ENCODE measurements at regions of chr3 and their contacts with region 1.

Region 1: GRCh38 chr3:168865022-168865551 is 769.4 kb upstream of the GOLIM4 start:
- DNase-seq: no peak
- H3K4me3 ChIP-seq: no peak overlapping the region
- H3K27ac ChIP-seq: no peak overlapping the region
- H3K4me1 ChIP-seq: no peaks in the 10 kb centered on the region
- H3K27me3 ChIP-seq: no peaks in the 10 kb centered on the region
- CTCF ChIP-seq: peak; percentile 77 to 81

Region 2: DNA sequence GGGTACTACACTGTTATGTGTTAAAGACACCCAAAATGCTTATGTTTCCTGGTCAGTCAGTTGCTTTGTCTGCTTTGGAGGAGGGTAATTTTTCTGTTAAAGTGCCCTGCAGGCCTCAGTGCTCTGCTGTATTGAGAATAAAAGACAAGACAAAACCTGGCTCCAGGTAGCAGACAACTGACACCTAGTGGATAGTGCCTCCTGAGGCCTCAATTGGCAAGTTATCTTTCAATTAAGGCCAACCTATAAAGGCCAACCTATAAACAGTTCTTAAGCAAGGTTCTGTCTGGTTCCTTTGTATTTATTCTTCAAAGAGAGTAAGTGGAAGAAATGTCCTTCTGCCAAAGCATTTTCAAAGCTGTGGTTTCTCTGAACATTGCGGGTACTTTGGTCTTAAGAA is 24.6 kb after region 1 on chr3:
- CTCF ChIA-PET with region 1: no interaction called
- dilution Hi-C with region 1: no loop called
- in situ Hi-C with region 1: no loop called
- intact Hi-C with region 1: loop called (anchors 1 kb)
- DNase-seq: peak; percentile 29
- H3K4me3 ChIP-seq: no peak overlapping the region
- H3K27ac ChIP-seq: no peak overlapping the region
- H3K4me1 ChIP-seq: peaks cover 4% of the 10 kb centered on the region
- H3K27me3 ChIP-seq: no peaks in the 10 kb centered on the region
- CTCF ChIP-seq: peak; percentile 38 to 62

Region 3: DNA sequence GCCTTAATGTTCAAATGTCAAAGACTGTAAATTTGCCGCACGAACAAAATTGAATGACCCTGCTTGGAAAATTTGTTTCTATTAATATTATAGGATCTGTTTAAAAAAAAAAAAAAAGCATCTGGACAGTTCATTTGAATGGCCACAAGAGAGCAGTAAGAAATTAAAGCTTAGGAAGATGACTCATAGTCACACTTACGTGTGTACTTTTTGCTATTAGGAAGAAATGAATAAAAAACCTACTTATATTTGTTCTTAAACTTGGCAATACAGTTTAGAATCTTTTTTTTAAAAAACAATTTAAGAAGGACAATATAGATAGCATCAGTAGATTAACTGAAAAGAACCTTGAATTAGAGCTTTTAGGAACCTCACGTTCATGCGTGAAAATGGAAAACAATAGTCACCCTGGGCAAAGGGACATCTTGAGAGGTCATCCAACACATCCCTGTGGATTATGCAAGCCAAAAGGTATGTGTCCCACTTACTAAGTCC is 176.6 kb after region 1 on chr3:
- CTCF ChIA-PET with region 1: interaction called, 4 read pairs
- dilution Hi-C with region 1: no loop called
- in situ Hi-C with region 1: no loop called
- intact Hi-C with region 1: loop called (anchors 5 kb)
- DNase-seq: peak; percentile 43
- H3K4me3 ChIP-seq: no peak overlapping the region
- H3K27ac ChIP-seq: peak overlapping the region; percentile 37
- H3K4me1 ChIP-seq: peaks cover 33% of the 10 kb centered on the region
- H3K27me3 ChIP-seq: no peaks in the 10 kb centered on the region
- CTCF ChIP-seq: peak; percentile 63 to 68

Region 4: DNA sequence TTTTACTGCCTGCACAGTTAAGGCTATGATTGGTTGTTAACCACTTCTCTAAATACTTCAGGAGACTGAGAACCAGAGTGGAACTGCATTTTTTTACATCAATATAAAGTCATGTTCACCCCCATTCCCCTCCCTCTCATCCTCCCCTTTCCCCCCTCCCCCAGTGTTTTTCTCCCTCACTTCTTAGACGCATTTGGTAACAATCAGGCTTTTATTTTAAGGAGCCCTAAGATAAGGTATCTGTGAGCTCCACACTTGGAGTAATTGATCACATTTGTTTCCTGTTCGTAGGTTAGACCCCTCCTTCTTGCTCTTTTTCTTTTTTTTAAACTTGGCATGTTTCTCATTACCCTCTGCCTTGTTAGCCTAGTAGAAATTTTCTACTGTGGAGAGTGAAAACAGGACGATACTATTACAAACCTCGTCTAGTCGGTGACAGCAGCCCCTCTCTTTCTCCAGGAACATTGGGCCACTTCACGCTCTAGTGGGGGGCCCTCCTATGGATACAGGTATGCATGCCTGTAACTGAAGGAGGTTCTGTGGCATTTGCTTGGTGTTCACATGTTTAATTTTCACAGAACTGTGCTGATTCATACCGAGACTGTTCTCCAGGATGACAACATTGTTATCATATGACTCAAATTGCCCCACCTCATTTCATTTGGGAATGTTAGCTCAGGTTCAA is 484.0 kb after region 1 on chr3:
- CTCF ChIA-PET with region 1: no interaction called
- dilution Hi-C with region 1: no loop called
- in situ Hi-C with region 1: no loop called
- intact Hi-C with region 1: loop called (anchors 10 kb)
- DNase-seq: peak; percentile 92
- H3K4me3 ChIP-seq: no peak overlapping the region
- H3K27ac ChIP-seq: peak overlapping the region; percentile 85
- H3K4me1 ChIP-seq: peaks cover 36% of the 10 kb centered on the region
- H3K27me3 ChIP-seq: no peaks in the 10 kb centered on the region
- CTCF ChIP-seq: no peak

Region 5: GRCh38 chr3:169744366-169745054 is 879.4 kb after region 1 on chr3:
- CTCF ChIA-PET with region 1: no interaction called
- dilution Hi-C with region 1: no loop called
- in situ Hi-C with region 1: no loop called
- intact Hi-C with region 1: loop called (anchors 2 kb)
- DNase-seq: peak; percentile 13
- H3K4me3 ChIP-seq: no peak overlapping the region
- H3K27ac ChIP-seq: no peak overlapping the region
- H3K4me1 ChIP-seq: peaks cover 11% of the 10 kb centered on the region
- H3K27me3 ChIP-seq: no peaks in the 10 kb centered on the region
- CTCF ChIP-seq: peak in 1 of 2 donors; percentile 13